Panc1 (cell line): ENCODE measurements at regions of chr3 and their contacts with region 1.

Region 1: DNA sequence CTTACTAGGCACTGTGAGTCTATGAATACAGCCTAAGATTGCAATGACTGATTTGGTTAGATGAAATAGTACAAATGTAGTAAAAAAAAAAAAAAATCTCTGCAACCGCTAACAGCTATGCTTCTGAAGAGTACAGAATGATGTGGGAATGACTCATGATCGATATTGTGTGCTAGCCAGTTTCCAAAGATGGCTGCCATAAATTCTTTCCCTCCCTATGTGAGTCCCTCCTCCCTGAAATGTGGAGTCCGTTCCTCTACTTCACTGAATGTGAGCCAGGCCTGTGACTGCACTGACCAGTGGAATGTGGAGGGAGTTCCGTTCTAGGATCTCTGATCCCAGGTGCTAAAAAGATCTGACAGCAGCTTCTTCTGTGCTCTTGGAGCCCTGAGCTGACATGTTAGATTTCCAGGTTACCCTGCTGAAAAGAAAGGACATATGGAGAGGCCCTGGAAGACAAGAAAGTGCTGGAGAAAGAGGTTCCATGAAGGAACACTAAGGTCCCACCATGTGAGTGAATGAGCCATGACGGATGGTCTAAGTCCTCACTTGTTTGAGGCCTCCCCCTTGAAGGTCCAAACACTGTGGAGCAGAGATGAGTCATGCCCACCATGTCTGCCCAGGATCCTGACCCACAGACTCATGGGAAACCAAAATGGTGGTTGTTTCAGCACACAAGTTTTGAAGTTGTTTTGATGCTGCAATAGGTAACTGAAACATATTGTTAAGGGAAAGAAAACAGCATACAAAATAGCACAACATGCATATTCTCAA is 46.3 kb downstream of the DGKG start:
- DNase-seq: no peak
- ATAC-seq: no peak
- H3K4me3 ChIP-seq: no peak overlapping the region
- H3K27ac ChIP-seq: no peak overlapping the region
- H3K4me1 ChIP-seq: no peaks in the 10 kb centered on the region
- H3K27me3 ChIP-seq: peaks cover 3% of the 10 kb centered on the region
- CTCF ChIP-seq: no peak

Region 2: DNA sequence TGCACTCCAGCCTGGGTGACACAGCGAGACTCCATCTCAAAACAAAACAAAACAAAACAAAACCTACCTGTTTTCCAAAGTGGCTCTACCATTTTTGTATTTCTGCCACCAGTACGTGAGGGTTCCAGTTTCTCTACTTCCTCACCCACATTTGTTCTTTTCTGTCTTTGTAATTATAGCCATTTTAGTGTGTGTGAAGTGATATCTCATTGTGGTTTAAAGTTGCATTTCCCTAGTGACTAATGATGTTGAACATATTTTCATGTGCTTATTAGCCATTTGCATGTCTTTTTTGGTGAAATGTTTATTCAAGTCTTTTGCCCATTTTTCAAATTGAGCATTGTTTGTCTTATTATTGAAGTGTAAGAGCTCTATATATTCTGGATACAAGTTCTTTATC is 428.7 kb before region 1 on chr3:
- CTCF ChIA-PET with region 1: no interaction called
- POLR2A ChIA-PET with region 1: interaction called, 14 read pairs
- in situ Hi-C with region 1: no loop called
- intact Hi-C with region 1: no loop called
- DNase-seq: no peak
- ATAC-seq: no peak
- H3K4me3 ChIP-seq: no peak overlapping the region
- H3K27ac ChIP-seq: no peak overlapping the region
- H3K4me1 ChIP-seq: no peaks in the 10 kb centered on the region
- H3K27me3 ChIP-seq: no peaks in the 10 kb centered on the region
- CTCF ChIP-seq: no peak